Upper lobe of right lung (tissue), 1 donor: ENCODE measurements at regions of chr11 and their contacts with region 1.

Region 1: GRCh38 chr11:102488208-102488607 is 35.6 kb upstream of the TMEM123 start:
- DNase-seq: no peak
- ATAC-seq: no peak
- H3K4me3 ChIP-seq: no peak overlapping the region
- H3K27ac ChIP-seq: no peak overlapping the region
- H3K4me1 ChIP-seq: no peaks in the 10 kb centered on the region
- H3K27me3 ChIP-seq: no peaks in the 10 kb centered on the region
- CTCF ChIP-seq: no peak

Region 2: DNA sequence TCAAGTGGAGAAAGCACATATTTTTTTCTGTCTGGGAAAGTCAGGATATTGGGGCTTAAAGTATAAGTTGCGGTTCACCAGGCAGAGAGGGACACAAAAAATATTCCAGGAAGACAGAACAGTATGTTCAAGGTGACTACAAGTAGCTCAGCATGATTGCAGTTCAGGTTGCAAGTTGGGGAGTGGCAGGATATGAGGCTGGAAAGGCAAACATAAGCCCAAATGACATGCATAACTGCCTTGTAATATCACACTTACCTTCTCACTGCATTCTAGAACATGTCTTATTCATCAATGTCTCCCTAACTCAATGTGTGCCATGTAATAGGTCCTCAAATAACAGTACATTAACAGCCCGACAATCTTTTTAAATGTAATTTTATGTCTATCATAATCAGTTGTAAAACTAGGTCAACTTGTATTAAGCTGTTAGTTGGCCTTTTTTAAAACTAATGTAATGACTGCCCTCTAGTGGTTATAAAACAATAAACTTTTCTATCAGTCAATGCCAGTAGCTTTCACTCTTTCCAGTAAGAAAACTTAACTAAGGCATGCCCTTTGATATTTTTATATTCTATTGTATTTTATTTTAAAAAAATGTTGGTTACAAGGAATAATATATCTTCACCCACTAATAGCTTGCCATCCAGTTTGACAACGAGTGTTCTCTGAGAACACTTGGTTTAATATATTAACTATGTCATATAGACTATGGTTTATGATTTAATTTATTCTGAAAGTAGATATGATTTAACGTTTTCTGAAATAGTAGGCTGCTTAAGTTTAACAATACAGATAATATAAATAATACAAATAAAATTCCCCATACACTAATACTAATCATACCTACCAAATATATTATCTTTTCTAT is 480.4 kb before region 1 on chr11:
- intact Hi-C with region 1: no loop called
- DNase-seq: no peak
- ATAC-seq: peak; percentile 91
- H3K4me3 ChIP-seq: no peak overlapping the region
- H3K27ac ChIP-seq: peak overlapping the region; percentile 72
- H3K4me1 ChIP-seq: no peaks in the 10 kb centered on the region
- H3K27me3 ChIP-seq: no peaks in the 10 kb centered on the region
- CTCF ChIP-seq: peak; percentile 62

Region 3: DNA sequence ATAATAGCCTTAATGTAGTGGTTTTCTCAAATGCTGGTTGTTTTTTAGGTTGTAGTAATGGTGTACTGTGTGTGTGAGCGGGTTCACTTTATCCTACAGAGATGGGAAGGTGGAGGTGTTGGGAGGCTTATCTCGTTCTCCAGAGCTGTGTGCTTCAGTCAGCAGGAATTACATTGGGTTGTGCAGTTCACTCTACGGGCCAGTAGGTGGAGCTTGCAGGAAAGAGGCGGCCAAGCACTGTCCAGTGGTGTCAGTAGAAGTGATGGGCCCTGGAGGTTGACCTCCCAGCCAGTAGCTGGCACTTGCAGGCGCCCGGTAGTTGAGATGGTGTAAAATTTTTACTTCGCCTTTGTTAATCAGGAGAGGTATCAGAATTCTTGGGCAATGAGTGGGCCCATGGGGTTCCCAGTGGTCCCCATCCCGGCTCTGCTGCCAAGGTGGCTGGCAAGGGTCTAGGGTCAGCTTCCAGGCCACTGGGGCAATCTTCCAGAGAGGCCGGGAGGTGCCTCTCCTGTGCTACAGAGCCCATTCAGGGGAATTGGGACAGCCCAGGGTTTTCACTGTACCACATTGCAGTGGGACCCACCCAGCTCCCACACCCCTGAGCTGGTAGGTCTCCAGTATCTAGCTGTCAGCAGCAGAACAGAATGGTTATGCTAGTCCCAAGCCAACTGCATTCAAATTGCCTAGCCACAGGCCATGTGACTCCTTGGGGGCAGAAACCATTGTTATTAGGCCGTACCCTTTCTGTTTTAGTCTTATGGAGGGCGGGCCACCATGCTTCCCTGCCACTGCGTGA is 97.3 kb before region 1 on chr11:
- intact Hi-C with region 1: loop called (anchors 10 kb)
- DNase-seq: no peak
- ATAC-seq: peak; percentile 97
- H3K4me3 ChIP-seq: no peak overlapping the region
- H3K27ac ChIP-seq: no peak overlapping the region
- H3K4me1 ChIP-seq: no peaks in the 10 kb centered on the region
- H3K27me3 ChIP-seq: no peaks in the 10 kb centered on the region
- CTCF ChIP-seq: peak; percentile 80

Region 4: GRCh38 chr11:102553835-102554282 is 65.7 kb after region 1 on chr11:
- intact Hi-C with region 1: no loop called
- DNase-seq: no peak
- ATAC-seq: peak; percentile 72
- H3K4me3 ChIP-seq: no peak overlapping the region
- H3K27ac ChIP-seq: peak overlapping the region; percentile 31
- H3K4me1 ChIP-seq: no peaks in the 10 kb centered on the region
- H3K27me3 ChIP-seq: no peaks in the 10 kb centered on the region
- CTCF ChIP-seq: no peak